ENCODE measurements at regions of chr10 and their contacts with region 1.

Region 1: GRCh38 chr10:112565434-112566053 is 118.5 kb downstream of the VTI1A start:
- DNase-seq: peak in 2 of 5 donors; percentile 15 to 28
- ATAC-seq: peak in 3 of 4 donors; percentile 48 to 67 (median 51)
- H3K4me3 ChIP-seq: no peak overlapping the region
- H3K27ac ChIP-seq: no peak overlapping the region
- H3K4me1 ChIP-seq: no peaks in the 10 kb centered on the region
- H3K27me3 ChIP-seq: no peaks in the 10 kb centered on the region
- CTCF ChIP-seq: peak; percentile 44 to 73 (median 62)
- POLR2A ChIP-seq: no peak

Region 2: DNA sequence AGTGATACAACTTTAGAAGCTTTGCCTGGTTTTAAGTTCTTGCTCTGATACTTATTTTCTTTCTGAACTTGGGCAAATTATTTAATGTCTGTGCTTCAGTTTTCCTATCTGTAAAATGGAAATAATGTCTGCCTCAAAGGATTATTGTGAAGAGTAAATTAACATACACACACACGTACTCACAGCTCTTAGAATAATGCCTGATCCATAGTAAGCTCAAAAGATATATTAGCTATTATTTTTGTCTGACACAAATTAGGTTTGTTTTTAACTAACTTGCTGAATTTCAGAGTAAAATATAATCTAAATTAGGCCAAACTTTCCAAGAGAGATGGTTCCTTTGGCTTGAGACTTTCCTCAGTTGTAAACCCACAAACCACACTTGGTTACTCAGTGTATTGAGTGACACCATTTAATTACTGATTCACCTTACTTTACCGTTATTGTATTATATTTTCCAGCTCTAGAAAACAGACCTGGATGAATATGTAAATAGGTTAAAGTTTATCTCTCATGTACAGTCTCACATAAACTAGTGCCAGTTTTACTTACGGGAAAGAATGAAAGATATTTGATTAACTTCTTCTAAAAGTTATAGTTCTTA is 68.1 kb before region 1 on chr10:
- intact Hi-C with region 1: no loop called
- DNase-seq: no peak
- ATAC-seq: no peak
- H3K4me3 ChIP-seq: no peak overlapping the region
- H3K27ac ChIP-seq: no peak overlapping the region
- H3K4me1 ChIP-seq: peaks cover 0 to 4% (median 0%) of the 10 kb centered on the region in 12 donors
- H3K27me3 ChIP-seq: no peaks in the 10 kb centered on the region
- CTCF ChIP-seq: no peak
- POLR2A ChIP-seq: no peak

Region 3: DNA sequence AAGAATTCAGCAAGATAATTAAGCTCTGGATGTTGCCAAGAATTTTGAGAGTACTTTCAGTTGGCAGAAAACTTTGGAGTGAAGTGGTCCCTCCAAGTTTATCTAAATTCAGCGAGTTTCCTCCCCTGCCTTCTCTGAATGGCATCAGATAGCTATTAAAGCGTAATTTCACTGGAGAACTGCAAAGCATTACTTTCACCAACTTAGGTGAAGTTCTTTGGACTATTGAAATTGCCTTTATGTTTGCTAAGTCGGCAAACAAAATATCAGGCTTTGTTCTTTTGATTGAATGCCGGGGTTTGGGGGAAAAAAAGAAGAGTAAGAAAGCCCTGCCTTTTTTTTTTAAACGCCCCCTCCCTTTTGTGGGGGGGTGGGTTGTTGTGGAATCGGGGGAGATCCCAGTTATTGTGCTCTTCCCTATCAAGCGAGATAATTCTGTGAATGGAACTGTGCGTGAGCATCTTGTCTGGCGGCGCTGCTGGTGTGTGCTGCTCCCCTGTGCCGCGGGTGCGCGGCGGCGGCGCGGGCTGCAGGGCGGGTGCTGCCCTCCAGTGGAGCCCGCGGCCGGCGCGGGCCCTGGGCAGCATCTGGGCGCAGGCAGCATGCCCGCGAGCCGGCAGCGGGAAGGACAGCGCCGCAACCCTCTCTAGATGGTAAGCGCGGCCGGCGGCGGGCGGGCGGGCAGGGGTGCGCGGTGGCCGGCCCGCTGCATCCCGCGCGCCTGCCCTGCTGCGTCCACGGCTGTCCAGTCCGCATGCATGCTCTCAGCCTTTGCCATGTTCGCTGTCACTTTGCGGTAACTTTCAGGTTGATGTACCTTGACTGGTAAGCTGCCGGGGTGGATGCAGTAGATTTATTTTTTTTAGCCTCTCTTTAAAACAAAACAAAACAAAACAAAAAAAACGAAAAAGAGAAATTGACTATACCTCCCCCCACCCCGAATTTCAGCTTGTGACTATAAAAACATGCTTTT is 561.0 kb after region 1 on chr10:
- intact Hi-C with region 1: loop called in 7 of 10 experiments (anchors 5 to 10 kb)
- DNase-seq: peak; percentile 66 to 86 (median 72)
- ATAC-seq: peak; percentile 69 to 99 (median 94)
- H3K4me3 ChIP-seq: peak overlapping the region in 9 of 12 donors; percentile 20 to 59 (median 42)
- H3K27ac ChIP-seq: peak overlapping the region in 7 of 12 donors; percentile 12 to 74 (median 42)
- H3K4me1 ChIP-seq: peaks cover 0 to 24% (median 7%) of the 10 kb centered on the region in 12 donors
- H3K27me3 ChIP-seq: peaks cover 0 to 5% (median 0%) of the 10 kb centered on the region in 9 donors
- CTCF ChIP-seq: peak; percentile 37 to 94 (median 80)
- POLR2A ChIP-seq: no peak

Region 4: GRCh38 chr10:113521123-113521795 is 955.7 kb after region 1 on chr10:
- intact Hi-C with region 1: loop called in 2 of 10 experiments (anchors 10 kb)
- DNase-seq: peak in 4 of 5 donors; percentile 60 to 75 (median 68)
- ATAC-seq: peak; percentile 79 to 90 (median 83)
- H3K4me3 ChIP-seq: no peak overlapping the region
- H3K27ac ChIP-seq: no peak overlapping the region
- H3K4me1 ChIP-seq: peaks cover 0 to 7% (median 0%) of the 10 kb centered on the region in 12 donors
- H3K27me3 ChIP-seq: no peaks in the 10 kb centered on the region
- CTCF ChIP-seq: peak; percentile 84 to 97 (median 93)
- POLR2A ChIP-seq: no peak

Measured in heart left ventricle (tissue), 16 donors.